ENCODE measurements at regions of chr4 and their contacts with region 1.

Region 1: GRCh38 chr4:7987148-7987989 is 47.7 kb upstream of the AFAP1 start:
- DNase-seq: peak; percentile 85
- H3K4me3 Mint-ChIP-seq: no peak overlapping the region
- H3K27ac Mint-ChIP-seq: no peak overlapping the region
- H3K4me1 Mint-ChIP-seq: peaks cover 9% of the 10 kb centered on the region
- H3K27me3 Mint-ChIP-seq: peaks cover 35% of the 10 kb centered on the region

Region 2: GRCh38 chr4:7710576-7711306 is 276.6 kb before region 1 on chr4:
- CTCF ChIA-PET with region 1: no interaction called
- DNase-seq: no peak
- H3K4me3 Mint-ChIP-seq: no peak overlapping the region
- H3K27ac Mint-ChIP-seq: no peak overlapping the region
- H3K4me1 Mint-ChIP-seq: no peaks in the 10 kb centered on the region
- H3K27me3 Mint-ChIP-seq: no peaks in the 10 kb centered on the region

Region 3: GRCh38 chr4:7770224-7771050 is 216.9 kb before region 1 on chr4:
- CTCF ChIA-PET with region 1: interaction called, 31 read pairs
- DNase-seq: peak; percentile 52
- H3K4me3 Mint-ChIP-seq: peak overlapping the region; percentile 63
- H3K27ac Mint-ChIP-seq: peak overlapping the region; percentile 84
- H3K4me1 Mint-ChIP-seq: peaks cover 29% of the 10 kb centered on the region
- H3K27me3 Mint-ChIP-seq: no peaks in the 10 kb centered on the region

Region 4: DNA sequence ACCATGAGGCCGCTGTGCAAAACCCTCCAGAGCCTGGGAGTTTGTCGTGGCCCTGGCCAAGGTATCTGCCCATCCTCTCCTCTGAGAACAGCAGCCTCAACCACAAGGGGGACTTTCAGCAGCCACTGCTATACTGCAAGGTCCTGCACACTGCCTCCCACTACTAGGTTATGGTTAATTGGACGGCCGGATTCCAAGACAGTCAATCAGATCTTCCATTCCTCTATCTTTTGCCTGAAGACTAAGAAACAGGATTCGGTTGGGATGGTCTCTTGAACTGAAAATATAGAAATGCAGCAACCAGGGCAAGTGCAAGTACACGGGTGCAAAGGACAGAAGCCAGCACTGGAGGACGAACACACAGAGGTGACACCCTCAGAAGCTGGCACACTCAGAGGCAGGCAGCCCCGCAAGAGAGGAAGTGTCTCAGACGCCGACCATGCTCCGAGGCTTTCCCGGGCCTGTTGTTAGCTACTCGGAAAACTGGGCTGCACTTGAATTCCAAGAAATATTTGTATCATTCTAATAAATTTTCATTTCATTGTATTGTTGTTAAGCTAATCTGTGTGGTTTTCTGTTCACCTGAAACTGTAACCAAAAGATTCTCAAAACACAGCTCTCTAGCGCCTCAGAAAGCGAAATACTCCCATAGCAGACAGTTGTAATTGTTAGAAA is 111.0 kb before region 1 on chr4:
- CTCF ChIA-PET with region 1: interaction called, 34 read pairs
- DNase-seq: peak; percentile 67
- H3K4me3 Mint-ChIP-seq: peak overlapping the region; percentile 52
- H3K27ac Mint-ChIP-seq: peak overlapping the region; percentile 92
- H3K4me1 Mint-ChIP-seq: peaks cover 70% of the 10 kb centered on the region
- H3K27me3 Mint-ChIP-seq: no peaks in the 10 kb centered on the region

Region 5: DNA sequence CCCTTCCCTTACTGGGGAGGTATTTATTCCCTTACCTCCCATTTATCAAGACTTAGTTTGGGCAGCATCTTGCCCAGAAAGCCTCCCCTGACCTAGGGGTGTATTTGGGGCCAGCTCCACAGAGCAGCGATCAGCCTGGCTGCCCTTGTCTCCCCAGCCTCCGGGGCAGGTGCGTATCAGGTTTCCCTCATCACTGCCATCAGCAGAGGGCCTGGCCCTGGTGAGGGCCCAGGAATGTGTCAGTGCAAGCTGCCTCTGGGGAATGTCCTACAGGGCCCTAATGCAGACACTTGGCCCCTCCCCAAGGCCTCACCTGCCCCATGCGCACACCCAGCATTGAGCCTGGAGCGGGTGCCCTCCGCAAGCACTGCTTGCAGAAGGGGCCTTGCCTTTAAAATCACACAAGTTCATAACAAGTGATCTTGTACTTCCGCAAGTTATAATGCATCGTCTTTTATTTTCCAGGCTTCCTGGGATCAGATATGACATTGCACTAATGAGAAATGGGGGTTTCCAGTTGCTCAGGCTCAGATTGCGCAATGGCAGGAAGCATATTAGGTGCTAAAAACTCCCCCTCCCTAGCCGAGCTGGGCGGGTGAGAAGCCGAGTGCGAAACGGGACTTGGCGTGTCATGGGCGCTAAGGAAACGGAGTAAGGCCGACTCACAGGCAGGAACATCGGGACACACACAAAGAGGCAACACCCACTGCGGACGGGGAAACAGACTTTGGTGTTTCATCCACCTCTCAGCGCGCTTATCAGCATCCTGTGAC is 22.3 kb before region 1 on chr4:
- CTCF ChIA-PET with region 1: interaction called, 13 read pairs
- DNase-seq: peak; percentile 46
- H3K4me3 Mint-ChIP-seq: no peak overlapping the region
- H3K27ac Mint-ChIP-seq: peak overlapping the region; percentile 69
- H3K4me1 Mint-ChIP-seq: peaks cover 79% of the 10 kb centered on the region
- H3K27me3 Mint-ChIP-seq: peaks cover 16% of the 10 kb centered on the region

Measured in activated naive CD4-positive, alpha-beta T cell treated with anti-CD3 and anti-CD28 coated beads, Interleukin-2, amount 10 ng/mL, durations not matched to agents 7 days and 5 days (primary cell).